ENCODE measurements at regions of chr3 and their contacts with region 1.

Region 1: DNA sequence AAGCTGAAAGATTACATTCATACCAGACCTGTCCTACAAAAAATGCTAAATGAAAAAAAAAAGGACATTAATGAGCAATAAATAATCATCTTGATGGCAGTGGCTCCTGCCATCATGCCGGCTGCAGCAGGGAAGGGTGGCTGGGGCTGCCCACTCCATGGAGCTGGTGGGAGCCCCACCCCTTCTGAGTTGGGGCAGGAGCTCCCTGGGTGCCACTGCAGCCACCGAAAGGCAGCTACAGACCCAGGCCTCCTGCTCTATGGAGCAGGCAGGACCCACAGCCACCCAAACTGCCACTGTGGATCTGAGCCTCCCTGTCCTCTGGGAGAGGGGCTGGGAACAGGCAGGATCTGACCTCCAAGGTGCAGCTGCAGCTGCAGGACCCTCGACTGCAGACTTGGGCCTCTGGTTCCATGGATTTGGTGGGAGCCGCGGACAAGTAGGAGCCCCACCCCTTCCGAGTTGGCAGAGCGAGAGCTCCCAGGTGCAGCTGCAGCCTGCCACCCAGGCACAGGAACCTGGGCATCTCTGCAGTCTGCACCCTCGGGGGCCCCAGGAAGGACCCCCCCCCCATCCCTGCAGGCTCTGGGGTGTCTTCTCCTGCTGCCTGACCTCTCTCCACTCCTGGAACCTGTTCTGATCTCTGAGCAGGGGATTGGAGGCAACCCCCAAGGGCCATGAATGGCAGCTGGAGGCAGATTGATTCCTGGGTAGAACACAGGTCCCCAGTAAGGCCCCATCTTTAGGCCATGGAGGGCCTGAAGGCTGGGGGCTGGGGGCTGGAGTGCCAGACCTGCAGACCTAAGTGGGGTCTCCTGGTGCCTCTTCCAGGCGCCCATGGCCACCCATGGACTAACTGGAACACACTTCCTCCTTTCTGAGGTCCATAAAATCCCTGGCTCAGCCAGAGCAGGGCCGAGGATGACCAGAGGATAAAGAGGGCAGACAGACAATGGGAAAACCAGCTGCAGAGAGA is 70.4 kb upstream of the TTC14 start:
- DNase-seq: no peak
- H3K4me3 Mint-ChIP-seq: no peak overlapping the region
- H3K27ac Mint-ChIP-seq: no peak overlapping the region
- H3K4me1 Mint-ChIP-seq: no peaks in the 10 kb centered on the region
- H3K27me3 Mint-ChIP-seq: no peaks in the 10 kb centered on the region
- CTCF ChIP-seq: no peak

Region 2: GRCh38 chr3:180267202-180267843 is 264.3 kb before region 1 on chr3:
- CTCF ChIA-PET with region 1: no interaction called
- intact Hi-C with region 1: no loop called
- DNase-seq: no peak
- H3K4me3 Mint-ChIP-seq: peak overlapping the region; percentile 22
- H3K27ac Mint-ChIP-seq: no peak overlapping the region
- H3K4me1 Mint-ChIP-seq: peaks cover 9% of the 10 kb centered on the region
- H3K27me3 Mint-ChIP-seq: no peaks in the 10 kb centered on the region
- CTCF ChIP-seq: no peak

Region 3: DNA sequence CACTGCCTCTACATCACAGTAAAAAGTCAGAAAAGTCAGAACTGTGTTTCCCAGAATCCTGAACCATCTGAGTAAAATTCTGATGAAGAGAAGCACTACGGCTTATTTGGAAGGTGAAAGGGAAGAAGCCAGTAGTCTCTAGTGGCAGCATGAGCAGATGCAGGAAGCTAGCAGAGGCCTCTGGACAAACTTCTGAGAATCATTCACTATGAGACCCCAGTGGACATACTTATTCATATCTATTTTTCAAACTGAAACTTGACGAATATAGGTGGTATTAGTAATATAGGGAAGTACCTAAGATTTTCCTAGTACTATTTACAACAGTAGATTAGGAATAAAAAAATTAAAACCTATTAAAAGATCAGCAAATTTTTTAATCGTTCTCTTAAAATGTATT is 202.4 kb before region 1 on chr3:
- CTCF ChIA-PET with region 1: no interaction called
- intact Hi-C with region 1: no loop called
- DNase-seq: no peak
- H3K4me3 Mint-ChIP-seq: no peak overlapping the region
- H3K27ac Mint-ChIP-seq: no peak overlapping the region
- H3K4me1 Mint-ChIP-seq: no peaks in the 10 kb centered on the region
- H3K27me3 Mint-ChIP-seq: no peaks in the 10 kb centered on the region
- CTCF ChIP-seq: no peak

Region 4: DNA sequence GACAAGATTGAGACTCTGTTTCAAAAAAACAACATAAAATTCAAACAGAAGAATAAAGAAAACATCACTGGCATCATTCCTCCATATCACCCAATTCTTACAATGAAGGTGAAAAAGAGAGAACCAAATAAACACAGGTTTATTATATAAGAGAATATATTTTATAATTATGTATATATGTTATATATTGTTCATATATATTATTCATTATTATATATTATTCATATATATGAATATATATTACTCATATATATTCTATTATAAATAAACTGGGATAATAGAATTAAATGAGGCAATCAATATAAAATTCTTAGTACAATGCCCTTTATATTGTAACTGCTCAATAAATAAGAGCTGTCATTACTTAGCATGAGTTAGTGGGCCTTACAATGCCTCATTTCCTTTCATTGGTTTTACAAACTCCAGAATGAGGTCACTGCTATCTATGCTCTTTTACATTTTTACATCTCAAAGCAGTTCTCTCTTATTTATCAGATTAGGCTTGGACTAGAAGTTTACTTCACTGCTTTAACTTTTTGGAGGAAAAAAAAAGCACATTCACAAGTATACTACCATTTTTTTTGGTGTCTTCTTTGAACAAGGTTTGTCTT is 65.1 kb before region 1 on chr3:
- CTCF ChIA-PET with region 1: no interaction called
- intact Hi-C with region 1: no loop called
- DNase-seq: no peak
- H3K4me3 Mint-ChIP-seq: no peak overlapping the region
- H3K27ac Mint-ChIP-seq: no peak overlapping the region
- H3K4me1 Mint-ChIP-seq: peaks cover 8% of the 10 kb centered on the region
- H3K27me3 Mint-ChIP-seq: no peaks in the 10 kb centered on the region
- CTCF ChIP-seq: no peak

Region 5: DNA sequence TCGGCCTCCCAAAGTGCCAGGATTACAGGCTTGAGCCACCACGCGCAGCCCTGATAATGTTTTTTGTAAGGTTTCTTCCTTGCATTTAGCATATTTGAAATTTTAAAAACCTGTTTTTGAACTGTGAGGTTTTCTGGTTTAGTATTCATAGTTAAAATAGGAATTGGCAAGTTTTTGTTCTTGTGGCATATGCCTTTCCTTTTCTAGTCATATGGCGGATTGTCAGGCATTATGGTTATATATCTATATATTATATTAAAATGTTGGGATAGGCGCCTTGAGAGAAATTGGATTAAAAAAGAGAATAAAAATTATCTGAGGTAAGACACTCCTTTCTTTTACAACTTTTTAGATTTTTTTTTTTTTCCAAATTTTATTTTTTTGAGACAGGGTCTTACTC is 409.2 kb after region 1 on chr3:
- CTCF ChIA-PET with region 1: no interaction called
- intact Hi-C with region 1: no loop called
- DNase-seq: no peak
- H3K4me3 Mint-ChIP-seq: no peak overlapping the region
- H3K27ac Mint-ChIP-seq: no peak overlapping the region
- H3K4me1 Mint-ChIP-seq: no peaks in the 10 kb centered on the region
- H3K27me3 Mint-ChIP-seq: no peaks in the 10 kb centered on the region
- CTCF ChIP-seq: no peak

Region 6: GRCh38 chr3:181056136-181056732 is 524.6 kb after region 1 on chr3:
- CTCF ChIA-PET with region 1: no interaction called
- intact Hi-C with region 1: loop called (anchors 5 kb)
- DNase-seq: no peak
- H3K4me3 Mint-ChIP-seq: no peak overlapping the region
- H3K27ac Mint-ChIP-seq: no peak overlapping the region
- H3K4me1 Mint-ChIP-seq: no peaks in the 10 kb centered on the region
- H3K27me3 Mint-ChIP-seq: peaks cover 9% of the 10 kb centered on the region
- CTCF ChIP-seq: no peak

Measured in Calu3 (cell line).